Astrocyte of the cerebellum (primary cell): ENCODE measurements at regions of chr1 and their contacts with region 1.

Region 1: DNA sequence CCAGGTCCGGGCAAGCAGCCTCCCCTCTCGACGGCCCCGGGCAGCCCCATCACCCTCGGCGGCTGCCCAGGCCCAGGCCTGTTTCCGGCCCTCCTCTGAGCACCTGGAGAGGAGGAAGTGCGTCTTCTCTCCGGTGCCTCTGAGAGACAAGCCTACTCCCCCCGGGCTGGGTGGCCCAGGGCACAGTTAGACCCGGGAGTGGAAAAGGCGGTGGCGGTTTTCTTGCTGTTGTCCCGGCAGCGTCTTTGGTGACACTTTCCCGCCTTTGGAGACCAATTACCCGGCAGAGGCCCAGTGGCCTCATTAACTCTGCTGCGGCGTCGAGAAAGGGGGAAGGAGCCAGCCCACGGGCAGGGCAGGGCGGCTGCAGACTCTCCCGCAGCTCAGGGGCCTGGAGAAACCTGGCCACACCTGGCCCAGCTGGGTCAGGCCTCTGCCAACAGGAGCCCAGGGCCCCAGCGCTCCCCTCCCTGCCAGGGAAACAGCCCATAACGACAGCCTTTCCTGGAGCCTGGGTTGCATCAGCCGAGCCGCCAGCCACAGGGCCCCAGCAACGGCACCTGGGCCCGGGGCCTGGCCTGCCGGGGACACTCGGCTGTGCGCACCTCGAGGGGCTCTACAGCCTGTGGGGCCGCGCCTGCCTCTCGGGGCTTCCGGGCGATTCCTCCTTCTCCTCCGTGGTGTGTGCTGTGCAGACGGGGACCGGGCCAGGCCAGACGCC is 28.4 kb upstream of the C1orf159 start:
- DNase-seq: no peak
- H3K4me3 ChIP-seq: no peak overlapping the region
- CTCF ChIP-seq: no peak

Region 2: GRCh38 chr1:1091663-1092478 is 52.4 kb before region 1 on chr1:
- in situ Hi-C with region 1: no loop called
- DNase-seq: no peak
- H3K4me3 ChIP-seq: no peak overlapping the region
- CTCF ChIP-seq: no peak

Region 3: DNA sequence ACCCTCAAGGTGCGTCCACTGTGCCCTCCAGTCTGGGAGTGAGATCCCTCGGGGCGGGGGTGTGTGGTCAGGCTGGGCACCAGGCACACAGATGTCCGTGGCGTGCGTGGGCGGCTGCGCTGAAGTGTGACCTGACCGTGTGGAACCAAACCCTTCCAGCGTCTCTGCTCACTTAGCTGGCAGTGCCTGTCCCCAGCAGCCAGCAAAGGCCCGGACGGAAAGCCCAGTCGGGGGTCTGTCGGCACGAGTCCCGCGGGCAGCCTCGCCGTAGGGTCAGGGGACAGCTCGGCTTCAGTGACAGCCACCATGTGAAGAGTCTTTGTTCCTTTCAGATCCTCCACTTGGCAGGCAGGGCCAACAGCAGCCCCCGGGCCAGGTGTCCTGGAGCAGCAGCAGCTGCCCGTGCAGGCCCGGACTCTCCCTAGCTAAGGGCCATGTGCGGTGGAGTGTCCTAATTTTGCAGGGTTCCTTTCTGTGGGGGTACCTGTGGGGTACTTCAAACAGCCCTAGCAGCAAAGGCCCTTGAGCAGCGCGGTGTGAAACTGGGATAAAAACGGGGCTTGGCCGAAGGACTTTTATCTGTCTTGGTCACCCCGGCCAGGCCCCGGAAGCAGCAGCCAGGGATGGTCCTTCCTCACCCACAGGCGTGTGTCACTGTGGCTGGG is 41.0 kb after region 1 on chr1:
- in situ Hi-C with region 1: no loop called
- DNase-seq: no peak
- H3K4me3 ChIP-seq: no peak overlapping the region
- CTCF ChIP-seq: no peak

Region 4: GRCh38 chr1:1291548-1292441 is 147.5 kb after region 1 on chr1:
- in situ Hi-C with region 1: loop called (anchors 25 kb)
- DNase-seq: peak; percentile 33
- H3K4me3 ChIP-seq: no peak overlapping the region
- CTCF ChIP-seq: peak; percentile 56